Activated CD8-positive, alpha-beta T cell treated with anti-CD3 and anti-CD28 coated beads for 36 hours (primary cell): ENCODE measurements at regions of chr3 and their contacts with region 1.

Region 1: GRCh38 chr3:51498876-51499738 is 708 bp downstream of the DCAF1 start:
- DNase-seq: peak; percentile 91
- ATAC-seq: peak; percentile 67
- H3K4me3 Mint-ChIP-seq: peak overlapping the region; percentile 98
- H3K27ac Mint-ChIP-seq: peak overlapping the region; percentile 95
- H3K4me1 Mint-ChIP-seq: peaks cover 15% of the 10 kb centered on the region
- H3K27me3 Mint-ChIP-seq: no peaks in the 10 kb centered on the region
- CTCF ChIP-seq: no peak

Region 2: DNA sequence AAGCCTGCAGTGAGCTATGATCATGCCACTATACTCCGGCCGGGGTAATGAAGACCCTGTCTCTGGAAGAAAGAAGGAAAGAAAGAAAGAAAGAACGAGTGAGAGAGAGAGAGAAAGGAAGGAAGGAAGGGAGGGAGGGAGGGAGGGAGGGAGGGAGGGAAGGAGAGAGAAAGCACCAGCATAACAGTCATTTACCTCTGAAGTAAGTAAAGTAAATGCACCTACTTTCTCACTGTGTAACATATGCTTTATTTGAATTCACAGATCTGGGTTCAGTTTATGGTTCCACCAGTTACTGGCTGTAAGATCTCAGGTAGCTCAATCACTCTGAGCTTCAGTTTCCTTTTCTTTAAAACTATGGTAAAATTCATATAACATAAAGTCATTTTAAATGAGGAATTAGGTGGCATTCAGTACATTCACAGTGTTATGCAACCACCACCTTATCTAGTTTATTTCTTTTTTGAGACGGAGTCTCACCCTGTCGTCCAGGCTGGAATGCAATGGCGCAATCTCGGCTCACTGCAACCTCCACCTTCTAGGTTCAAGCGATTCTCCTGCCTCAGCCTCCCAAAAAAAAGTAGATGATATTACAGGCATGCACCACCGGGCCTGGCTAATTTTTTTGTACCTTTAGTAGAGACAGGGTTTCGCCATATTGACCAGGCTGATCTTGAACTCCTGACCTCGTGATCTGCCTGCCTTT is 23.3 kb after region 1 on chr3:
- CTCF ChIA-PET with region 1: interaction called, 11 read pairs
- POLR2A ChIA-PET with region 1: interaction called, 3 read pairs
- intact Hi-C with region 1: no loop called
- DNase-seq: no peak
- ATAC-seq: no peak
- H3K4me3 Mint-ChIP-seq: no peak overlapping the region
- H3K27ac Mint-ChIP-seq: no peak overlapping the region
- H3K4me1 Mint-ChIP-seq: peaks cover 3% of the 10 kb centered on the region
- H3K27me3 Mint-ChIP-seq: no peaks in the 10 kb centered on the region
- CTCF ChIP-seq: no peak

Region 3: GRCh38 chr3:51568036-51568435 is 68.9 kb after region 1 on chr3:
- CTCF ChIA-PET with region 1: interaction called, 10 read pairs
- POLR2A ChIA-PET with region 1: no interaction called
- intact Hi-C with region 1: no loop called
- DNase-seq: no peak
- ATAC-seq: no peak
- H3K4me3 Mint-ChIP-seq: no peak overlapping the region
- H3K27ac Mint-ChIP-seq: no peak overlapping the region
- H3K4me1 Mint-ChIP-seq: peaks cover 14% of the 10 kb centered on the region
- H3K27me3 Mint-ChIP-seq: no peaks in the 10 kb centered on the region
- CTCF ChIP-seq: no peak

Region 4: GRCh38 chr3:51670823-51671733 is 172.0 kb after region 1 on chr3 and contains the start of gene TEX264:
- CTCF ChIA-PET with region 1: interaction called, 193 read pairs
- POLR2A ChIA-PET with region 1: interaction called, 11 read pairs
- intact Hi-C with region 1: no loop called
- DNase-seq: peak; percentile 89
- ATAC-seq: peak; percentile 68
- H3K4me3 Mint-ChIP-seq: peak within 1 kb of the TSS; percentile 85
- H3K27ac Mint-ChIP-seq: peak within 1 kb of the TSS; percentile 86
- H3K4me1 Mint-ChIP-seq: peaks cover 59% of the 10 kb centered on the region
- H3K27me3 Mint-ChIP-seq: no peaks in the 10 kb centered on the region
- CTCF ChIP-seq: no peak
- total RNA-seq, gene TEX264: 24.9 to 26.0 TPM

Region 5: DNA sequence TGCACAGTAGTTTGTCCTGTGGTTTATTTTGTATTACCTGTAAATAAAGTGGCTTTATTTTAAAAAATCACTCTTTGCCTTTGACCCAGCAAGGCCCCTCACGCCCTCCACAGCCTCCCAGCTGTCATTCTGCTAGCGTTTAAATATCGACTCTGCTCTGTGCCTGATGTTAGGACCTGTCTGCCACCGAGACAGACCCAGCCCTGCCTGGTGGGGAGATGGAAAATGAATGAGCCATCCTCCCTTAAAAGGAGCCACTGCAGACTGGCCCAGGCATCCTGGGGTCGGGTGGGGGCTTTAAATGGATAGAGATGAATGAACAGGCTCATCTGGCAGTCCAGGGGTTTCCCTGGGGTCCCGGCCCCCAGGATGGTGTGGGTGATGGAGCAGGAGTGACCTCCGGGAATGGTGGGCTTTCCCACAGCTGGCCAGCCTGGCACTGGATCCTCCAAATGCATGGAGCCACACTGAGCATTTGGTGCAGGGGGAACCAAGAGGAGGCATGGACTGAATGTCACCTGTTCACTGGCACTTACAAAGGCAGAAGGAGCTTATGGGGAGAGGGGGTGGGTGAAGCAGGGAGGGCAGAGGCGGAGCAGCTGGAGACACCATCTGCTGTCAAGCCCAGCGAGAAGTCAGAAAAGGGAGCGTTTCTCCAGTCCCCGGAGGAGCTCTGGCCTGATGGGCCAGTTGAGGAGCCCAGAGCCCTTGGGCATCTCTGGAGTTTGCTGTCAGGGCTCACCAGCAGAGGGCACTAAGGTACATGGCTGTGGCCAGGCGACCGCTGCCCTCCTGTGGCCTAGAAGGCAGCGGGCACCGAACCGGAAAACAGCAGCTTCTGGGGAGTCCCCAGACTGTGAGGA is 219.7 kb after region 1 on chr3:
- CTCF ChIA-PET with region 1: interaction called, 18 read pairs
- POLR2A ChIA-PET with region 1: no interaction called
- intact Hi-C with region 1: no loop called
- DNase-seq: peak; percentile 90
- ATAC-seq: peak; percentile 95
- H3K4me3 Mint-ChIP-seq: no peak overlapping the region
- H3K27ac Mint-ChIP-seq: no peak overlapping the region
- H3K4me1 Mint-ChIP-seq: peaks cover 35% of the 10 kb centered on the region
- H3K27me3 Mint-ChIP-seq: no peaks in the 10 kb centered on the region
- CTCF ChIP-seq: peak; percentile 87